Tibial artery (tissue), 4 donors: ENCODE measurements at regions of chr5 and their contacts with region 1.

Region 1: DNA sequence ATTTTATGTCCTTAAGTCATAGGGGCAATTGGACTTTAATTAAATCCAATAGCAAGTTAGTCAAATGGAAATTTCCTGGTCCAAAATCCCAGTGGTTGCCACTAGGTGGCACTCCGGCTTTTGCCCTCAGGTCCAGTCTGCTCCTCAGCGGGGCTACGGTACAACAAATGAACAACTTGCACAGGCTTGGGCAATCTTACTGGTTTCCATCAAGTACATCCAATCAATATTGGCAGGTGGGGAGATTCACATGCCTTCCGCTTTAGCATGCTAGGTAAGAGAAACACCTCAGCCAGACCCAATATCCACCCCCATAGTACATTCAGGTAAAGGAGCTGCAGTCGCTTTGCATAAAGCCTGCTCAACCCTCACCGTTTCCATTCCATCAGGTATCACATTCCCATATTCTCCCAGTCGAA is 6.3 kb upstream of the MXD3 start:
- DNase-seq: peak in 1 of 2 donors; percentile 72
- H3K4me3 ChIP-seq: no peak overlapping the region
- H3K27ac ChIP-seq: no peak overlapping the region
- H3K4me1 ChIP-seq: peaks cover 0 to under 1% (median under 1%) of the 10 kb centered on the region in 4 donors
- H3K27me3 ChIP-seq: no peaks in the 10 kb centered on the region
- CTCF ChIP-seq: peak; percentile 55 to 78

Region 2: GRCh38 chr5:177334155-177334551 is 16.2 kb after region 1 on chr5:
- intact Hi-C with region 1: loop called (anchors 1 kb)
- DNase-seq: no peak
- H3K4me3 ChIP-seq: no peak overlapping the region
- H3K27ac ChIP-seq: no peak overlapping the region
- H3K4me1 ChIP-seq: peaks cover 0 to 8% (median 0%) of the 10 kb centered on the region in 4 donors
- H3K27me3 ChIP-seq: no peaks in the 10 kb centered on the region
- CTCF ChIP-seq: no peak

Region 3: DNA sequence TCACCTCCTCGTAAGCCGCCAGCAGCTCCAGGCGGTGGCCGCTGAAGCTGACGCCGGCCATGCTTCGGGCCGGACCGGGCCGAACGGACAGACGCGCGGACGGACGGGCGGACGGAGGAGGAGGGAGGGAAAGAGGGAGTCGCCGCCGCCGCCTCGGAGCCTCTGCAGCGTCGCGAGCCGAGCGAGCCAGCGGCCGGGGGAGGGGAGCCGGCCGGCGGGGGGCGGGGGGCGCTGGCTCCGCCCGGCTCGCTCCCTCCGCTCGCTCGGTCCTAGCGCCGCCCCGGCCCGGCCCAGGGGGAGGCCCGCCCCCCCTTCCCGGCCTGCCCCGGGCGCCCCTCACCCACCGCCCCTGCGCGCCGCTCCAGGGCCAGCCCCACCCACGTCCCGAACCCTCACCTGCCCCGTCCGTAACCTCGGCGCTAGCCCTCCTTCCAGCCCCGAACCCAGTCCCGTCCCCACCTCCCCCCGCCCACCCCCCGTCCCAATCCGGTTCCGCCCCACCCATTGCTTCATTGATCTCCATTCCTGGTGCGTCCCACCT is 155.6 kb after region 1 on chr5 and contains the start of gene DBN1:
- intact Hi-C with region 1: no loop called
- DNase-seq: peak in 1 of 2 donors; percentile 80
- H3K4me3 ChIP-seq: peak within 1 kb of the TSS; percentile 85 to 94
- H3K27ac ChIP-seq: peak within 1 kb of the TSS; percentile 91 to 100
- H3K4me1 ChIP-seq: peaks cover 0 to 88% (median 72%) of the 10 kb centered on the region in 4 donors
- H3K27me3 ChIP-seq: no peaks in the 10 kb centered on the region
- CTCF ChIP-seq: no peak